ENCODE measurements at regions of chr3 and their contacts with region 1.

Region 1: GRCh38 chr3:197456261-197457091 is 99.3 kb downstream of the BDH1 start:
- DNase-seq: peak; percentile 73 to 90 (median 85)
- H3K4me3 ChIP-seq: peak overlapping the region; percentile 44 to 85 (median 71)
- H3K27ac ChIP-seq: peak overlapping the region; percentile 60 to 97 (median 90)
- H3K27me3 ChIP-seq: no peaks in the 10 kb centered on the region
- CTCF ChIP-seq: peak in 20 of 56 donors; percentile 6 to 44 (median 25)

Region 2: GRCh38 chr3:197224034-197224444 is 232.4 kb before region 1 on chr3:
- intact Hi-C with region 1: loop called in 1 of 2 experiments (anchors 10 kb)
- DNase-seq: no peak
- H3K4me3 ChIP-seq: peak overlapping the region in 1 of 59 donors; percentile 17
- H3K27ac ChIP-seq: peak overlapping the region in 16 of 59 donors; percentile 3 to 62 (median 22)
- H3K27me3 ChIP-seq: no peaks in the 10 kb centered on the region
- CTCF ChIP-seq: peak; percentile 49 to 89 (median 72)

Region 3: DNA sequence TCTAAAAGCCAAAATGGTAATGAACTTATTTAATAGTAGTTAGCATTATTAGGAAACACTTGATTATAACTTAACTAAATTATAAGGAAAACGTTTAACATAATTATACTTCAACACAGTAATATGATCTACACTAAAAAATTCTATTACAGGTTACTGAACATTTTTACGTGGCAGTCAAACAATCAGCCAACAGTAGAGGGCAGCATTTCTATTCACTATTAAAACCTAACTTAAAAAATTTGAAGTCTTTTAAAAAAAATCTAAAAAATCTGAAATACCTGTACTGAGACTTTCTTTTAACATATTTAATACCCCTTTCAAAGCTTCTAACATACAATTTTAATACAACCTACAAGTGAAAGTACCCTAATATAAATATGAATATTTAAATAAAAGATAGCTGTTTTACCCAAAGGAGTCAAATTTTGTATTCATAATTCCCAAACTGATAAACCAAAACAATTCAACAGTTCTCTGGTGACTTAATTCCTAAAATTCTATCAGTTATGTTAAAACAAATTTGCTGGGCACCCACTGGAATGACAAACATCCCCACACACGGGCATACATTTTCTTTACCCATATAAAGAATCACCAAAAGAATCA is 199.5 kb before region 1 on chr3:
- intact Hi-C with region 1: loop called in 1 of 2 experiments (anchors 2 kb)
- DNase-seq: peak in 2 of 10 donors; percentile 40 to 46
- H3K4me3 ChIP-seq: peak overlapping the region in 23 of 59 donors; percentile 8 to 54 (median 42)
- H3K27ac ChIP-seq: peak overlapping the region in 55 of 59 donors; percentile 1 to 79 (median 59)
- H3K27me3 ChIP-seq: no peaks in the 10 kb centered on the region
- CTCF ChIP-seq: peak; percentile 64 to 98 (median 82)

Region 4: DNA sequence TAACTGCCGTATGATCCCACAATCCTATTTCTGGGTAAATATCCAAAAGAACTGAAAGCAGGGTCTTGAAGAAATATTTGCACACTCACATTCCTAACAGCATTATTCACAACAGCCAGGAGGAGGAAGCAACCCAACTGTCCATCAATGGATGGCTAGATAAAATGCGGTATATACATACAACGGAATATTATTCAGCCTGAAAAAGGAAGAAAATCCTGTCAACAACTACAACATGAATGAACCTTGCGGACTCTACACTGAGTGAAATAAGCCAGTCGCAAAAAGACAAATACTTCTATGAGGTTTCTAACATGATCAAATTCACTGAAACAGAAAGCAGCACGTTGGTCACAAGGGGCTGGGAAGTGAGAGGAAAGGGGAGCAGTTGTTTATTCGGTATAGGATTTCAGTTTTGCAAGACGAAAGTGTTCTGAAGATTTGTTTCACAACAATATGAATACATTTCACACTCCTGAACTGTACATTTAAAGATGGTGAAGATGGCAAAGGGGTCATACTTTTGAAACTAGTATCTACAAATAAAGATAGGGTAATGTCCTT is 164.3 kb before region 1 on chr3:
- intact Hi-C with region 1: loop called (anchors 5 to 10 kb)
- DNase-seq: no peak
- H3K4me3 ChIP-seq: peak overlapping the region in 24 of 59 donors; percentile 7 to 98 (median 28)
- H3K27ac ChIP-seq: peak overlapping the region in 46 of 59 donors; percentile 2 to 99 (median 54)
- H3K27me3 ChIP-seq: no peaks in the 10 kb centered on the region
- CTCF ChIP-seq: peak in 1 of 56 donors; percentile 19

Region 5: GRCh38 chr3:197298341-197298857 is 158.1 kb before region 1 on chr3 and contains the start of gene DLG1:
- intact Hi-C with region 1: loop called (anchors 5 to 10 kb)
- DNase-seq: peak in 9 of 10 donors; percentile 38 to 74 (median 60)
- H3K4me3 ChIP-seq: peak within 1 kb of the TSS; percentile 65 to 98 (median 93)
- H3K27ac ChIP-seq: peak within 1 kb of the TSS; percentile 65 to 99 (median 95)
- H3K27me3 ChIP-seq: no peaks in the 10 kb centered on the region
- CTCF ChIP-seq: peak in 1 of 56 donors; percentile 7
- total RNA-seq, gene DLG1: 124 to 310 (median 169) TPM

Region 6: GRCh38 chr3:197343656-197344408 is 112.6 kb before region 1 on chr3:
- intact Hi-C with region 1: no loop called
- DNase-seq: no peak
- H3K4me3 ChIP-seq: no peak overlapping the region
- H3K27ac ChIP-seq: no peak overlapping the region
- H3K27me3 ChIP-seq: no peaks in the 10 kb centered on the region
- CTCF ChIP-seq: no peak

Region 7: DNA sequence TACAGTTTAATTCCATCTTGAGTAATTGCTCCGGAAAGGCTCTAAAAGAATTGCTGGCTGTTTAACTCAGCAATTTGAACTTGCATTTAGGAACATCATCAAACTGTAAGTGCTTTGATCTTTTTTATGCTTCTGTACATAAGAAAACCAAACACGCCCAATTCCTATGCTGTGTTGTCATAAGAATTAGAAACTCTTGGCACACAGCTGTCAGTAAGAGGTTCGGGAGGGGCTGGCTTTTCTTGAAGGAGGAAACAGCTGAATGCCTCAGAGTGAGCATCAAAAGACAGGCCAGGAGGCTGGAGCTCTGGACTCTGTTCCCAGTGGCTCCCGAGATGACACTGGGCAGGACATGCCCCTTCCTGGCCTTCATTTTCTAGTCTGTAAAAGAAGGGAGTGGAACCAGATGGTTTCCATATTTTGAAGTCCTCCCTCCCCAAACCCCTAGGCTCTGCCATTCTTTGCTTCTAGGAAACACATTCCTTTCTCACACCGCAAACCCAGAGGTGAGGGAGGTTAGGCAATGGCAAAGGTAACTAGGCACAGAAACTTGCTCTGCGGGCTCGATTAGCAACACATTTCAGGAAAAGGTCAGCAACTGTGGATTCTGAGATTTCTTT is 84.3 kb before region 1 on chr3:
- intact Hi-C with region 1: loop called (anchors 5 to 10 kb)
- DNase-seq: peak in 2 of 10 donors; percentile 23 to 25
- H3K4me3 ChIP-seq: no peak overlapping the region
- H3K27ac ChIP-seq: peak overlapping the region in 43 of 59 donors; percentile 3 to 99 (median 92)
- H3K27me3 ChIP-seq: no peaks in the 10 kb centered on the region
- CTCF ChIP-seq: no peak

Region 8: DNA sequence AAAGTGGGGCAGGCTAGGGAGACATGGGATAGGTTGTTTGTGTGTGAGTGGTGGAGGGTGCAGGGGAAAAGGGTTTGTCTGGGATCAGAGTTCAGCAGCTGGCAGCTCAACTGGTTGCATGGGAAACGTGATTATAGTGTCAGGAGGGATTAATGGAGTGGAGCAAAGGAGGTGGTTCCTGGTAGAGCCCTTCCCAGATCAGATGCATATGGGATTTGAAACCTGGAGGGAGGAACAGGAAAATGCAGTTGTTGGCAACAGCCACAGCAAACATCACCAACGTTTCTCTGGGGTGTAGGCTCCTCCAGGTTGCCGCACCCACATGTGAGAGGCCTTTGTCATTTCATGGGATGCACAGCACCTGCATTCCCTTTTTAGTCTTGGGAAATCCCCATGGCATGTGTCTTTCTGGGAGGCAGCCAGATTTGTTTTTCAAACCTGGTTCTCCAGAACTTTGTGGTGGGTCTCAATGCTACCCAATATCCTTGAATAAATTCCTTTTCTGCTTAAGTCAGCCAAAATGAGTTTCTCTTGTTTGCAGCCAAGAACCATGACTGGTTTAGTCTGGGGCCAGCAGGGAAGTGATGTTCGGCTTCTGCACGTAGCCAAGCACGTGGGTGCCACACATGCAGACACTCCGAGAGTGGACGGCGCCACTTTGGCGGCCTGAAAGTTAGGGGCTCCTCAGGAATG is 38.0 kb after region 1 on chr3:
- intact Hi-C with region 1: no loop called
- DNase-seq: no peak
- H3K4me3 ChIP-seq: no peak overlapping the region
- H3K27ac ChIP-seq: no peak overlapping the region
- H3K27me3 ChIP-seq: no peaks in the 10 kb centered on the region
- CTCF ChIP-seq: no peak

Region 9: DNA sequence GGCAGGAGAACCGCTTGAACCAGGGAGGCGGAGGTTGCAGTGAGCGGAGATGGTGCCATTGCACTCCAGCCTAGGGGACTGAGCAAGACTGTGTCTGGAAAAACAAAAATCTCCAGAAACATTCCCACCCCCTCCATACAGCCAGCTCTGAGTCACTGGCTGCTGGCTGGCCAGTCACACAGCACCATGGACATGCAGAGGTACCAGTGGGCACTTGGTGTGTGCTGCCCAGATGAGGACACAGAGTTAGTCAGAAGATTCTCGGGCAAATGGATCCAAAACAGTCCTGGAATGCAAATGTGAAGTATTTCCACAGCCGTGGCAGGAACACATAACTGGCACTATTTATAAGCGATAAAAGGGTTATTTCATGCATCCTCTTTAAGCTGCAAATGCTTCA is 54.7 kb after region 1 on chr3:
- intact Hi-C with region 1: loop called (anchors 2 to 5 kb)
- DNase-seq: peak in 4 of 10 donors; percentile 66 to 83 (median 75)
- H3K4me3 ChIP-seq: no peak overlapping the region
- H3K27ac ChIP-seq: peak overlapping the region in 56 of 59 donors; percentile 3 to 97 (median 76)
- H3K27me3 ChIP-seq: no peaks in the 10 kb centered on the region
- CTCF ChIP-seq: peak in 1 of 56 donors; percentile 7

Region 10: GRCh38 chr3:197567904-197568681 is 111.6 kb after region 1 on chr3:
- intact Hi-C with region 1: no loop called
- DNase-seq: no peak
- H3K4me3 ChIP-seq: peak overlapping the region in 34 of 59 donors; percentile 1 to 47 (median 16)
- H3K27ac ChIP-seq: peak overlapping the region in 57 of 59 donors; percentile 2 to 91 (median 77)
- H3K27me3 ChIP-seq: no peaks in the 10 kb centered on the region
- CTCF ChIP-seq: peak in 3 of 56 donors; percentile 8 to 14 (median 14)

Measured in dorsolateral prefrontal cortex (tissue), 120 donors.